ENCODE measurements at regions of chr7 and their contacts with region 1.

Region 1: GRCh38 chr7:71733107-71733870 is 601.3 kb downstream of the GALNT17 start:
- DNase-seq: peak; percentile 9 to 62 (median 51)
- ATAC-seq: no peak
- H3K4me3 ChIP-seq: no peak overlapping the region
- H3K4me3 Mint-ChIP-seq: no peak overlapping the region
- H3K27ac ChIP-seq: no peak overlapping the region
- H3K27ac Mint-ChIP-seq: no peak overlapping the region
- H3K4me1 ChIP-seq: no peaks in the 10 kb centered on the region
- H3K4me1 Mint-ChIP-seq: peaks cover 2% of the 10 kb centered on the region
- H3K27me3 ChIP-seq: peaks cover 0 to 5% of the 10 kb centered on the region in 2 experiments
- H3K27me3 Mint-ChIP-seq: peaks cover 6% of the 10 kb centered on the region
- CTCF ChIP-seq: peak; percentile 55

Region 2: DNA sequence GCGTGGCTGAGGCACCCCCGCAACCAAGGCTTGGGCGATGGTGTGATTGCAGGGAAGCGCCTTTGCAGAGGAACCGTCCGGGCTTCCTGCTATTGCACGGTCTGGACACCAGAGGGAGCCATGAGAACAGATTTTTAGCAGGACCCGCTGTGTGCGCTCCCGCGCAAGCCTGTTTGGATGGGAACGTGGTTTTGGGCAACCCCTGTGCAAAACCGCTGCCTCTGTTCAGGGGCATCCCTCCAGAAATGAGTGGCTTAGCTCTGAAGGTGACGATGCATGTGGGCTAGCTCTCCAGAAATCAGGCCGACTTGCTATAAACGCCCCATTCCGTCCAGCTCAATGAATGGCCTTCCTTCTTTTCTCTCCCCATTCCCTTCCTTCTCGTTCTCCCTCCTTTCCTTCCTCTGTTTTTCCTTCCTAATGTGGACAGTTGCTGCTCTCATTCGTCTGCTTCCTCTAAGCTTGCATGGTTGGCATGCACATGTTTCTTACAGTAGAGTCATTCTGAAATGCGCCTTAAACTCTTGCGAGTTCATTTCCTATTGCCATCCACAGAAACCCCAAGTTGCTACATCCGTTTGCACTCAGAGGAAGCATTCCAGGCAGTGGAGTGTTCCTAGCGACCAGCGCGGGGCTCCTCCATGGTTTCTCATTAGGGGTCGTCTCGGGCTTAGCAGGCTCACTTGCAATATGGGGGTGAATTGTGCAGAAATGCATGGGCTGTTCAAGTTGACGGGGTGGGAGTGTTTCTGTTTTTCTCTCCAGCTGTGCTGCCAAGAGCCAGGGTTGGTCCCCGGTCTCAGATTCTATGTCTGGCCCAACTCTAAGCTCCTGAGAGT is 903.8 kb before region 1 on chr7:
- CTCF ChIA-PET with region 1: no interaction called
- POLR2A ChIA-PET with region 1: no interaction called
- intact Hi-C with region 1: loop called in 1 of 2 experiments (anchors 2 kb)
- DNase-seq: peak; percentile 13 to 67 (median 45)
- ATAC-seq: peak; percentile 36
- H3K4me3 ChIP-seq: no peak overlapping the region
- H3K4me3 Mint-ChIP-seq: peak overlapping the region; percentile 30
- H3K27ac ChIP-seq: no peak overlapping the region
- H3K27ac Mint-ChIP-seq: no peak overlapping the region
- H3K4me1 ChIP-seq: peaks cover 6% of the 10 kb centered on the region
- H3K4me1 Mint-ChIP-seq: peaks cover 11% of the 10 kb centered on the region
- H3K27me3 ChIP-seq: no peaks in the 10 kb centered on the region
- H3K27me3 Mint-ChIP-seq: peaks cover 20% of the 10 kb centered on the region
- CTCF ChIP-seq: peak; percentile 58

Region 3: DNA sequence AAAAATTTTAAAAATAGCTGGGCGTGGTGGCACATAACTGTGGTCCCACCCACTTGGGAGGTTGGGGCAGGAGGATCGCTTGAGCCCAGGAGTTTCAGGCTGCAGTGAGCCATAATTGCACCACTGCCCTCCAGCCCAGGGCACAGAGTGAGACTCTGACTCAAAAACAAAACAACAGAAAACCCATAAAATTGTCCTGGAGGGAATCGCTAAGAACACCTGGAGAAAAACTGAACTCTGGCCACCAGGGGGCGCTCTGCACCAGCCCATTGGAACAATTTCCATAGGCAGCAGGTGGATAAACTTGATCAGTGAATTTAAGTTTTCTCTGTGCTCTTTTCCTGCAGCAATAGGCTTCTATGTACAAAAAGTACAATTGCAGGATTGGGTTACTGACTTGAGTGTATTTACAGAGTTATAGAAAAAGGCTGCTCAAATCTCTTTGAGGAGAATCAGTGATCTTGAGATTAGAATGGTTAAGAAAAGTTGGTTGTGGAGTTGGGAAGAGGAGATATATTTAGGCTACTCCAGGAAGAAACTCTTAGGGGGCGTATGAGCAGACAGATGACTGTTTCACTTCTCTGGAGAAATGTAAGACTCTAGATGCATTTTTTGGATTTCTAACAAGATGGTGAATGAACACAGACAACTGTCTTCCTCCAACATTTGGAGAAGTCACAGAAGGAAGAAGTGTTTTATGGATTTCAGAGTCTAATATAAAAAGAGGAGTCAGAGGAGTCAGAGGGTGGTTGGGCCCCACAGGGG is 876.2 kb before region 1 on chr7:
- CTCF ChIA-PET with region 1: no interaction called
- POLR2A ChIA-PET with region 1: no interaction called
- intact Hi-C with region 1: loop called (anchors 10 kb)
- DNase-seq: peak in 7 of 9 experiments; percentile 24 to 64 (median 44)
- ATAC-seq: no peak
- H3K4me3 ChIP-seq: no peak overlapping the region
- H3K4me3 Mint-ChIP-seq: no peak overlapping the region
- H3K27ac ChIP-seq: no peak overlapping the region
- H3K27ac Mint-ChIP-seq: no peak overlapping the region
- H3K4me1 ChIP-seq: no peaks in the 10 kb centered on the region
- H3K4me1 Mint-ChIP-seq: no peaks in the 10 kb centered on the region
- H3K27me3 ChIP-seq: no peaks in the 10 kb centered on the region
- H3K27me3 Mint-ChIP-seq: no peaks in the 10 kb centered on the region
- CTCF ChIP-seq: peak; percentile 89

Region 4: DNA sequence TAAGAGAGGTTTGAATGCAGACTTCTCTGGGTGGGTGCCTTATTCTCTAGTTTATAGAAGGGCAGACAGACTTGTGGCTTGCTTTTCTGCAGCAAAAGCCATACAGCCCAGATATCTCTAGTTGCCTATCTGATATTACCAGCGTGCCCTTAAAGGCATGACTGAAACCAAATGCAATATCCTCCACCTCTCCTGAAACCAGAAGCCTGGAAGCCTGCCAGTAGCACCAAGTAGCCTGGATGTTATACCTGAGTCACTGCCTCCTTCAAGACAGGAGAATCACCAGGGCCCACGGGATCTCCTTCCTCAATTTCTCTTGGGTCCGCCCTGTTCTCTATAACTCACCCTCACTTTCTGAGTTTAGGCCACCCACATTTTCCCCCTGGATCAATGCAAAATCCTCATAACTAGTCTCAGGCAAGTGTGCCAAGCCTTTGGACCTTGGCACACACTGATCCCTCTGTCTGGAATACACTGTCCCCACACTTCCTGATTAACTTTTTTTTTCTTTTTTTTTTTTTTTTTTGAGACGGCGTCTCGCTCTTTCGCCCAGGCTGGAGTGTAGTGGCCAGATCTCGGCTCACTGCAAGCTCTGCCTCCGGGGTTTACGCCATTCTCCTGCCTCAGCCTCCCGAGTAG is 37.1 kb after region 1 on chr7:
- CTCF ChIA-PET with region 1: no interaction called
- POLR2A ChIA-PET with region 1: no interaction called
- intact Hi-C with region 1: no loop called
- DNase-seq: no peak
- ATAC-seq: no peak
- H3K4me3 ChIP-seq: no peak overlapping the region
- H3K4me3 Mint-ChIP-seq: no peak overlapping the region
- H3K27ac ChIP-seq: no peak overlapping the region
- H3K27ac Mint-ChIP-seq: no peak overlapping the region
- H3K4me1 ChIP-seq: no peaks in the 10 kb centered on the region
- H3K4me1 Mint-ChIP-seq: no peaks in the 10 kb centered on the region
- H3K27me3 ChIP-seq: no peaks in the 10 kb centered on the region
- H3K27me3 Mint-ChIP-seq: no peaks in the 10 kb centered on the region
- CTCF ChIP-seq: no peak